HEK293T (cell line): ENCODE measurements at regions of chr17 and their contacts with region 1.

Region 1: GRCh38 chr17:18960803-18961511 is 9.0 kb downstream of the SLC5A10 start:
- DNase-seq: peak; percentile 88

Region 2: DNA sequence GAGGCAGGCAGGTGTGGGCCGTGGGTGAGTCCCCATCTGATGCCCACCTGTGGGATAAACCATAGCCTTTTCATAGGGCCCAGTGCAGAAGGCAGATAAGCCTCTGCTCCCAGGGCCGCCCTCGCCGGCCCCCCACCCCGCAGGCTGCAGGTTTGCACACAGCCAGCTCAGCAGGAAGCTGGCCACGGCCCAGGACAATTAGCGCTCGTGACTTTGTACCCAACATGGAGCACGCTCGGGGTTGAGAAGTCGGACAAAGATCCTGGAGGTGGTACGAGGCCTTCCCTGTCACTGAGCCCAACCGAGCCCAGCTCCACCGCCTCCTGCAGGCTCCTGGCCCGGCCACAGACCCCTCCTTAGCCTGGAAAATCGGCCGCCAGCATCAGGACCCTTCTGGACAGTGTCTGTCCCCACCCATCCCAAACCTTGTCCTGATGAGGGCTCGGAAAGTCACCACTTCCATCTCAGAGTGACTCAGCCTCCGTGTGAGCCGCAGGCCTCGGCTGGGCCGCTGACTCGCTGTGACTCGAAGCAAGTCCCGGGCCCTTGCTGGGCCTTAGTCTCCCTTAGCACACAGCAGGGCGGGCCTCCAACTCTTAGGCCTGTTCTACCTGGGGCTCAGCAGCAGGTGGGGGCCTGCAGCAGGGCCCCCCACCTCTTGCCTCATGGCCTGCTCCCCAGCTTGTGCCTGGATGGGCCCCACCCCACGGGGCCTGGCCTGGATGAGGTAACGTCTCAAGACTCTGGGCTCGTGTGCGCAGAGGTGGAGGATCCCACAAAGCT is 20.9 kb after region 1 on chr17:
- CTCF ChIA-PET with region 1: interaction called, 13 read pairs
- POLR2A ChIA-PET with region 1: no interaction called
- DNase-seq: peak; percentile 56

Region 3: GRCh38 chr17:19021622-19022083 is 60.7 kb after region 1 on chr17:
- CTCF ChIA-PET with region 1: interaction called, 10 read pairs
- POLR2A ChIA-PET with region 1: no interaction called
- DNase-seq: no peak